IMR-90 (cell line): ENCODE measurements at regions of chr6 and their contacts with region 1.

Region 1: GRCh38 chr6:139375232-139376016 is 976 bp upstream of the CITED2 start:
- DNase-seq: peak; percentile 98
- ATAC-seq: peak; percentile 61
- H3K4me3 ChIP-seq: peak overlapping the region; percentile 69
- H3K27ac ChIP-seq: peak overlapping the region; percentile 91
- H3K4me1 ChIP-seq: peaks cover 8% of the 10 kb centered on the region
- H3K27me3 ChIP-seq: no peaks in the 10 kb centered on the region
- CTCF ChIP-seq: peak; percentile 37
- POLR2A ChIP-seq: peak; percentile 59
- RAD21 ChIP-seq: peak; percentile 57

Region 2: GRCh38 chr6:138115877-138116660 is 1259.4 kb before region 1 on chr6:
- CTCF ChIA-PET with region 1: no interaction called
- POLR2A ChIA-PET with region 1: no interaction called
- dilution Hi-C with region 1: no loop called
- in situ Hi-C with region 1: loop called (anchors 25 kb)
- intact Hi-C with region 1: no loop called
- DNase-seq: peak; percentile 74
- ATAC-seq: peak; percentile 89
- H3K4me3 ChIP-seq: no peak overlapping the region
- H3K27ac ChIP-seq: no peak overlapping the region
- H3K4me1 ChIP-seq: no peaks in the 10 kb centered on the region
- H3K27me3 ChIP-seq: peaks cover 19% of the 10 kb centered on the region
- CTCF ChIP-seq: peak; percentile 87
- POLR2A ChIP-seq: no peak
- RAD21 ChIP-seq: peak; percentile 87

Region 3: GRCh38 chr6:139588076-139588639 is 212.7 kb after region 1 on chr6:
- CTCF ChIA-PET with region 1: interaction called, 3 read pairs
- POLR2A ChIA-PET with region 1: interaction called, 5 read pairs
- dilution Hi-C with region 1: no loop called
- in situ Hi-C with region 1: no loop called
- intact Hi-C with region 1: loop called (anchors 1 kb)
- DNase-seq: peak; percentile 65
- ATAC-seq: peak; percentile 22
- H3K4me3 ChIP-seq: no peak overlapping the region
- H3K27ac ChIP-seq: peak overlapping the region; percentile 97
- H3K4me1 ChIP-seq: peaks cover 14% of the 10 kb centered on the region
- H3K27me3 ChIP-seq: no peaks in the 10 kb centered on the region
- CTCF ChIP-seq: no peak
- POLR2A ChIP-seq: no peak
- RAD21 ChIP-seq: no peak

Region 4: DNA sequence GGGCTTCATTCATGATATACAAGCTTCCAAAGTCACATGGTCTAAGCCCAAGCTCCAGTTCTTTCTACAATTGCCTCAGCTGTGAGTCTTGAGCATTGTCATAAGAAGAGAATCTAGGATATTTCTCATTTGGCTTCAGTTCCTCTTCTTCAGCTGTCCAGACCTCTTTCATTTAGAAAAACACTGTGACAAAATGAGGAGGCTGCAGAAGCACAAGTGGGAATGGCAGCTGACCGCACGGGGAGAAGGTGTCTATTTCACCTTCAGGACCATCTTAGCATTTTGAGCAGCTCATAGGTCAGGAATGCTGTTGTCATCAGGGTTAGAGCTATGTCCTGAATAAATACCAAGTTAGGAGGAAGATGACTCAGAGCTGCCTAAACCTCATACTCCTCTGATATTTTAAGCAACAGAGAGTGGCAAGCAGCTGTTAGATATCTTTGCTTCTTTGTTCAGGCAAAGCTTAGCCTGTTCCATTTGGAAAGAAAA is 389.1 kb after region 1 on chr6:
- CTCF ChIA-PET with region 1: interaction called, 5 read pairs
- POLR2A ChIA-PET with region 1: interaction called, 14 read pairs
- dilution Hi-C with region 1: no loop called
- in situ Hi-C with region 1: loop called (anchors 10 kb)
- intact Hi-C with region 1: loop called (anchors 2 kb)
- DNase-seq: peak; percentile 99
- ATAC-seq: peak; percentile 94
- H3K4me3 ChIP-seq: no peak overlapping the region
- H3K27ac ChIP-seq: peak overlapping the region; percentile 29; the same call in 1 of the 2 replicates
- H3K4me1 ChIP-seq: peaks cover 13% of the 10 kb centered on the region
- H3K27me3 ChIP-seq: no peaks in the 10 kb centered on the region
- CTCF ChIP-seq: no peak
- POLR2A ChIP-seq: no peak
- RAD21 ChIP-seq: peak; percentile 17; the same call in 1 of the 2 replicates

Region 5: DNA sequence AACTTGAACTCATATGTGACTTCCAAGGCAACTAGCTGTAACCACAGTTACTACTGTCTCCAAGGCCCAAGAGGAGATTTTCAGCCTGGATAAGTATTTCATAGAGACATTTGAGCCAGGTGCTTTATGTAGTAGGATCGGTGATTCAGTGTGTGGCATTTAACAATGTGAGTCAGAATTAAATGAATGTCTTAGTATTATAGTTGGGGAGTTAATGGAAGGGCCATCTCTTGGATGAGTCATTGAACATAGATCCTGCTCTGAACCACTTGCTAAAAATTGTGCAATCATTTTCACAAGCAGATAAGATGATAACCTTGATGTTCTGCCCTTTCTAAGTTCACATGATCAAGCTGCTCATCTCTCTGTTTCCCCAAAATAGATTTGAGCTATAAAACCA is 667.9 kb after region 1 on chr6:
- CTCF ChIA-PET with region 1: no interaction called
- POLR2A ChIA-PET with region 1: no interaction called
- dilution Hi-C with region 1: no loop called
- in situ Hi-C with region 1: loop called (anchors 10 kb)
- intact Hi-C with region 1: no loop called
- DNase-seq: peak; percentile 96
- ATAC-seq: peak; percentile 90
- H3K4me3 ChIP-seq: no peak overlapping the region
- H3K27ac ChIP-seq: no peak overlapping the region
- H3K4me1 ChIP-seq: peaks cover 7% of the 10 kb centered on the region
- H3K27me3 ChIP-seq: no peaks in the 10 kb centered on the region
- CTCF ChIP-seq: no peak
- POLR2A ChIP-seq: no peak
- RAD21 ChIP-seq: peak; percentile 6; the same call in 1 of the 2 replicates

Region 6: GRCh38 chr6:140441256-140441655 is 1065.8 kb after region 1 on chr6:
- CTCF ChIA-PET with region 1: no interaction called
- POLR2A ChIA-PET with region 1: no interaction called
- dilution Hi-C with region 1: no loop called
- in situ Hi-C with region 1: loop called (anchors 10 kb)
- intact Hi-C with region 1: loop called (anchors 2 kb)
- DNase-seq: peak; percentile 63
- ATAC-seq: peak; percentile 62
- H3K4me3 ChIP-seq: no peak overlapping the region
- H3K27ac ChIP-seq: peak overlapping the region; percentile 4; the same call in 1 of the 2 replicates
- H3K4me1 ChIP-seq: peaks cover 13% of the 10 kb centered on the region; the same call in 1 of the 2 replicates
- H3K27me3 ChIP-seq: no peaks in the 10 kb centered on the region
- CTCF ChIP-seq: peak; percentile 57
- POLR2A ChIP-seq: no peak
- RAD21 ChIP-seq: peak; percentile 72

Region 7: DNA sequence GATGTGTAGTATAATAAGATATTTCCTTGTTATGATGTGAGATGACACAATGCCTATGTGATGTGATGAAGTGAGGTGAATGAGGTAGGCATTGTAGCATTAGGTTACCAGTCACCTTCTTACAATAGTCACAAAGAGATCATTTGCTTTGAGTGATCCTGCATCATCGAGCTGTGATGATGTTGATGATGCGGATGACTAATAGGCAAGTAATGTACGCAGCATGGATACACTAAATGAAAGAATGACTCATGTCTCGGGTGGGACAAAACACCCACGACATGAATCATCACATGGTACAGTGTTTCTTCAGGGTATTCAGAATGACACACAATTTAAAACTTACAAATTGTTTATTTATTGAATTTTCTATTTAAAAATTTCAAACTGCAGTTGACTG is 1951.0 kb after region 1 on chr6:
- CTCF ChIA-PET with region 1: no interaction called
- POLR2A ChIA-PET with region 1: no interaction called
- dilution Hi-C with region 1: no loop called
- in situ Hi-C with region 1: no loop called
- intact Hi-C with region 1: loop called (anchors 10 kb)
- DNase-seq: peak; percentile 100
- ATAC-seq: peak; percentile 94
- H3K4me3 ChIP-seq: peak overlapping the region; percentile 14; the same call in 1 of the 2 replicates
- H3K27ac ChIP-seq: no peak overlapping the region
- H3K4me1 ChIP-seq: peaks cover 8% of the 10 kb centered on the region; the same call in 1 of the 2 replicates
- H3K27me3 ChIP-seq: no peaks in the 10 kb centered on the region
- CTCF ChIP-seq: no peak
- POLR2A ChIP-seq: no peak
- RAD21 ChIP-seq: no peak